Vagina (tissue), 2 donors: ENCODE measurements at regions of chr14 and their contacts with region 1.

Region 1: DNA sequence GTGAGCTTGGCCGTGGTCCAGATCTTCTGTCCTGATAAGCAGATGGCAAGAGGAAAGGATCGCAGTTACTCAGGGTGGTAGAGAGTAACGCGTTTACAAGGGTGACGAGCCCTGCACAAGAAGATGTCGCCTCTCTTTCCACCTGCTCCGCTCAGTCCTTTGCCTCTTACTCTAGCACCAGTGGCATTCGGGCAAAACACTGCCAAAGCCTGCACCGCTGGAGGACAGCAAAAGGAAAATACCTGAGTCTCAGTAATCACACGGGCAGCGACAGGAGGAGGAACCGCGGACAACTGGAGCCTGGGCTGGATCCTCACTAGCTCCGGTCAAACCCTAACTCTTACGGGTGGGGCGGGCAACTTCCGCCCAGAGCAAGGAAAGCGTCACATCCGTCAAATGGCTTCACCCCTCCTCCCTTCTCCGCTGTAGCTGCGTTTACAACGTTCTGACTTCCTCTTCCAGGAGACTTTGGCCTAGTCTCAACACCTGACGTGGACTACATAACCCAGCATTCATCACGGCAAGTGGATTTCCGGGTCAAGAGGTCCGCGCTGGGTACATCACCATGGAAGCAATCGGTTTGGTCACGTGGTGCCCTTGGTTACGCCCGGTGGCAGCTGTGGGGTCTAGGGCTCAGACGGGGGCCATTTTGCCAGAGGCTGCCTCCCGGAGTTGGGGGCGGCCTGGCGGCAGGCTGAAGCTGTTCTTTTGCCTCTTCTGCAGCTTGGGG is at the starts of genes KLHL28 and TOGARAM1:
- DNase-seq: peak; percentile 100
- H3K4me3 ChIP-seq: peak within 1 kb of the TSS; percentile 86 to 90
- H3K27ac ChIP-seq: peak within 1 kb of the TSS; percentile 90
- H3K4me1 ChIP-seq: peaks cover 70% of the 10 kb centered on the region
- H3K27me3 ChIP-seq: no peaks in the 10 kb centered on the region
- CTCF ChIP-seq: no peak
- POLR2A ChIP-seq: peak in 1 of 2 donors; percentile 76
- total RNA-seq, gene KLHL28: 12.8 TPM
- total RNA-seq, gene TOGARAM1: 13.0 TPM

Region 2: GRCh38 chr14:43541356-43541755 is 1420.4 kb before region 1 on chr14:
- intact Hi-C with region 1: no loop called
- DNase-seq: no peak
- H3K4me3 ChIP-seq: no peak overlapping the region
- H3K27ac ChIP-seq: no peak overlapping the region
- H3K4me1 ChIP-seq: no peaks in the 10 kb centered on the region
- H3K27me3 ChIP-seq: no peaks in the 10 kb centered on the region
- CTCF ChIP-seq: no peak
- POLR2A ChIP-seq: no peak

Region 3: GRCh38 chr14:44897045-44897844 is 64.5 kb before region 1 on chr14:
- intact Hi-C with region 1: loop called (anchors 1 kb)
- DNase-seq: peak in 1 of 2 donors; percentile 98
- H3K4me3 ChIP-seq: peak overlapping the region; percentile 72 to 89
- H3K27ac ChIP-seq: peak overlapping the region; percentile 99
- H3K4me1 ChIP-seq: peaks cover 30% of the 10 kb centered on the region
- H3K27me3 ChIP-seq: no peaks in the 10 kb centered on the region
- CTCF ChIP-seq: no peak
- POLR2A ChIP-seq: peak in 1 of 2 donors; percentile 52

Region 4: GRCh38 chr14:45070215-45070614 is 108.4 kb after region 1 on chr14:
- intact Hi-C with region 1: no loop called
- DNase-seq: no peak
- H3K4me3 ChIP-seq: no peak overlapping the region
- H3K27ac ChIP-seq: no peak overlapping the region
- H3K4me1 ChIP-seq: no peaks in the 10 kb centered on the region
- H3K27me3 ChIP-seq: no peaks in the 10 kb centered on the region
- CTCF ChIP-seq: no peak
- POLR2A ChIP-seq: no peak

Region 5: DNA sequence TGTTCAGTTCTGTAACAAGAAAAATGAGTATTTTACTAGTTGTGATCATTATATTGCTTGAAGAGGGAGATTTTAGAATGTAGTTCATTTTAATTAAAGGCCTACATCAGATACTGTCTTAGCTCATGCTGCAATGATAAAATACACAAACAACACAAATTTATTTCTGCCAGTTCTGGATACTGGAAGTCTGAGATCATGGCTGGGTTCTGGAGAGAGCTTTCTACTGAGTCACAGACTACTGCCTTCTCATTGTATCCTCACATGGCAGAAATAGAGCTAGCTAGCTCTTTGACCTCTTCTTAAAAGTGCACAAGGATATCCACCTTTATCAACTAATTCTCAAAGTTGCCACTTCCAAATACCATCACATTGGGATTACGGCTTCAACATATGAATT is 237.5 kb after region 1 on chr14:
- intact Hi-C with region 1: no loop called
- DNase-seq: no peak
- H3K4me3 ChIP-seq: no peak overlapping the region
- H3K27ac ChIP-seq: no peak overlapping the region
- H3K4me1 ChIP-seq: no peaks in the 10 kb centered on the region
- H3K27me3 ChIP-seq: no peaks in the 10 kb centered on the region
- CTCF ChIP-seq: no peak
- POLR2A ChIP-seq: no peak